WTC11 (cell line): ENCODE measurements at regions of chr9 and their contacts with region 1.

Region 1: DNA sequence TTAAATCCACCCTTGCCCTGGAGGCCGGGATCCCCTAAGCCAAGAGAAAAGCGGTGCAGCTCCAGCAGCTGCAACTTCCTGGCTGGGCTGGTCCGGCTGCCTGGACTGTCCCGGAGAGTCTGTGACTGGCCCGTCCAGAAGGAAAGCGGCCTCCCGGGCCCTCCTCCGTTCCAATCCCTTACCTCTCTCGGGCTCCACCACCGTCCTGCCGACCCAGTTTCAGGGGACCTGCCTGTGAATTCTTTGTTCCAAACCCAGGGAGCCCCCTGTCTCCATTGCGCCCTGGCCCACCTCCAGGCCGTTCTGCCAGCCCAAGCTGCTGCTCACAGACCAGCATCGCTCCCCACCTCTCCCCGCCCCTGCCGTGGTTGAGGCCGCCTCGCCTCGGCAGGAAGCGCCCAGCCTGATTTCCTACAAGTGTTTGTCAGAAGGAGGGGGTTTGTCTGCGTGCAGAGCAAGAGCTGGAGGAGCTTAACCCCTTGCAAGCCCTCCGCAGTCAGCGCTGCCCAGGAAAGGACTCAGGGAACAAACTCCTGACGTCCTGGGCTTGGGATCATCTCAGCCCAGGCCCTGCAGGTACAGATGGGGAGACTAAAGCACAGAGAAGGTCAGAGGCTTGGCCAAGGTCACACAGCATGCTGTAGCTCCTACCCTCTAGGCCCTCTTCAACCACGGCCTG is at the start of gene AKNA:
- DNase-seq: peak; percentile 74
- ATAC-seq: peak; percentile 60
- H3K4me3 Mint-ChIP-seq: peak within 1 kb of the TSS; percentile 53
- H3K27ac Mint-ChIP-seq: peak within 1 kb of the TSS; percentile 59
- H3K4me1 Mint-ChIP-seq: peaks cover 76% of the 10 kb centered on the region
- H3K27me3 Mint-ChIP-seq: no peaks in the 10 kb centered on the region
- CTCF ChIP-seq: no peak
- total RNA-seq, gene AKNA: 26.0 to 29.3 TPM (median 27.5 TPM) in 3 replicates

Region 2: GRCh38 chr9:114339130-114339908 is 48.5 kb before region 1 on chr9:
- CTCF ChIA-PET with region 1: interaction called, 20 read pairs
- POLR2A ChIA-PET with region 1: no interaction called
- DNase-seq: peak; percentile 70
- ATAC-seq: peak; percentile 89
- H3K4me3 Mint-ChIP-seq: no peak overlapping the region
- H3K27ac Mint-ChIP-seq: no peak overlapping the region
- H3K4me1 Mint-ChIP-seq: no peaks in the 10 kb centered on the region
- H3K27me3 Mint-ChIP-seq: no peaks in the 10 kb centered on the region
- CTCF ChIP-seq: peak; percentile 86